ENCODE measurements at regions of chr9 and their contacts with region 1.

Region 1: GRCh38 chr9:94860968-94861871 is 134.7 kb downstream of the AOPEP start:
- DNase-seq: no peak
- H3K4me3 ChIP-seq: no peak overlapping the region
- CTCF ChIP-seq: no peak
- POLR2A ChIP-seq: no peak

Region 2: GRCh38 chr9:94805585-94805984 is 55.6 kb before region 1 on chr9:
- intact Hi-C with region 1: loop called (anchors 10 kb)
- DNase-seq: peak in 1 of 2 donors; percentile 75
- H3K4me3 ChIP-seq: no peak overlapping the region
- CTCF ChIP-seq: no peak
- POLR2A ChIP-seq: no peak

Region 3: DNA sequence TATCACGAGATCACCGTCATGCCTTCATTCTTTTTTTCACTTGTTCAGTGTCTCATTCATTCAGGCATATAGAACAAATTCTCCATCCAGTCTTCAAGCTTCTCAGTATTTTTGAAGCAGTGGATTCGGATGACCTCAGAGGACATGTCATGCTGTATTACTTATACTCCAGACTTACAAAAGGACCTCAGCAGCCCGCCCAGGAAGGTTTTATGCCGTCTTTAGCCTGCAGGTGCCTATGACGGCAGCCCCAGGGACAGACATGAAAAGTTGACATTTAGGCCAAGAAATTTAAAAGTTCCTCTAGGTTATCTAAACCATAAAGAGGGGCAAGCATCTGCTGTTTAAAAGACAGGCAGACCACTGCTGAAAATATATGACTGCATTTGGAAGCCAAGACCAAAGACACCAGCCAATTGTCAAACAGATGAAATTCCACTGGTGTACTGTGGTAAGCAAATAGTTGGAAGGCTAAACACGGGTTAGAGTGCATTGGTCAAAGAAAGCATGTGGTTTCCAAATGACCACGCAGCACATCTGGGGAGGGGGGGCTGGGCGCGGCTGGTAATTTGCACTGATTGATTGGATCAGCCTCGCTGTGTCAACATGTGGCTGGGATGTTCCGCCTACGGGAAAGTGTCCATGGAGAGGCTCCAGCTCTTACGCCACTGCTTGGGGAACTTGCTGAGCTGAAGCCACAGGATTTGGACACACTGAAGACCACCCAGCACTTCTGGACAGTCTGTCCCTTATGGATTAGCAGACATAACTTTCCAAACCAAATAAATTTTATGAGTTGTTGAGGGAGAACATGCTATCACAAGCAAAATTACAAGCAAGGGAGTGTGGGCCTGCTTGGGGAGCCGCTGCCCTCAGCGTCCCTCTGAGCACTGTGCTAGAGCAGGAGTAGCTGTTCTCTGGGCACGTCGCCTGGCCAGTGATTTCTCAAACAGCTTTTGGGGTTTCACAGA is 282.7 kb after region 1 on chr9:
- intact Hi-C with region 1: no loop called
- DNase-seq: peak; percentile 91 to 97
- H3K4me3 ChIP-seq: no peak overlapping the region
- CTCF ChIP-seq: no peak
- POLR2A ChIP-seq: no peak

Region 4: DNA sequence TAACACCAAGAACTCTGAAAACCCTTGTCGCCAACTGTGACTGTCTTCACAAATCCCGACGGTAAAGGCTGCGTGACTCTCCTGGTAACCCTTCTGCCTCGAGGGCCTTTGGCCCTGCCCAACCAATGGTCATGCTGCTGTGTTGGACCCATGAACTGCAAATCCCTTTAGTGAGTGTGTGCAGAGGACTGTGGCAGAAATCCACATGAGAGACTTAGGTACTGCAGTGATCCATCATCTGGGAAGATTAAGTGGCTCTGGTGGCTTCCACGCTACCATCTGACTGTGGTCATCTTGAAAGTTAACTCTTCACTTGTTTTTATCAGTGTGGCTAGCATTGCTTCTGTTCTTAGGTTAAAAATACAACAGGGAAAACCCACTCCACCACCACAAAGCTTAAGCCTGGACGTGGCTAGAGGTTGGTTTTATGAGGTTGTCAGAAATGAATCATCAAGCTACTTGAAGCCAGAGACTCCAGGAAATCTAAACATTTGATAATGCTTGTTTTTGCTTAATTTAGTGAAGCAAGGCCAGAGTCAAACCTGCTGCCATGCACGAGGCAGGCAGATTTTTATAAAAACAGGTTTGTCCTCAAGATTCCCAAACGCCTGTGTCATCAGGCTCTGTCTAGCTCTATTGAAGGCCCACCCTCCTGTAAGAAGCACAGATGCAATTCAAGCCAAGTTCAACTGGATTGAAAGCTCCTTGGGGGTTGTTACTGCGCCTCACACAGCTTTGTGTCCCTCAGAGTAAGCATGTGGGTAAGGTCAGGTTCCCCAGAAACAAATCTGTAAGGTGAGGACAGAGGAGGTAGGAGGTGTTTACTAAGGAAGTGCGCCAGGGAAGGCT is 961.6 kb after region 1 on chr9:
- intact Hi-C with region 1: no loop called
- DNase-seq: no peak
- H3K4me3 ChIP-seq: no peak overlapping the region
- CTCF ChIP-seq: no peak
- POLR2A ChIP-seq: no peak